Panc1 (cell line): ENCODE measurements at regions of chr10 and their contacts with region 1.

Region 1: DNA sequence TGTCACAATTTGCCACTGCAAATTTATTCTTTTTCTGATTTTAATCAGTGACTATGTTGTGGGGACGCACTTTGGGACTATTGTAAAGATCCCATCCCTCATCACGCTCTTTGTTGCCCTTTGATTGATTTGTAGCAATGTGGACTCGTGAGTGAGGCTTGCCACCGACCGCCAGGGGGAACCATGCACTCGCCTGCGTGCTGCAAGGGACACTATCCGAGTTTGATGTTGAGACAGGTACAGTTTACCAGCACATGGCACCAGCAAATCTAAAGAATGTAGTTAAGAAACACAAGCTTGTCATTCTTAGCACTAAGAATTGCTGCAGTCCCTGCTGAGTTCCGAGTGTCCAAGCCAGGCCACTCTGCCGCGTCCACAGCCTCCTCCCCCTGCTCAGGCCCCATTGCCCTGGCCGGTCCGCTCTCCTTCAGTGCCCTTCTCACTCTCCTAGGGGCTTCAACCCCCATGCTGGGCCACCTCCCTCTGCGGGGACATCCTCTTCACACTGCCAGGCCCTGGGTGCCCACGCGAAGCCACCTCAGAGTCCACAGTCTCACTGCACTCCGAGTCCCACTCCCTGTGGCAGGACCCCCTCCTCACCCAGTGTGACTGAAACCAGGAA is 2.0 kb upstream of the SFTPA2 start:
- DNase-seq: peak; percentile 39
- ATAC-seq: peak; percentile 96
- H3K4me3 ChIP-seq: no peak overlapping the region
- H3K27ac ChIP-seq: no peak overlapping the region
- H3K4me1 ChIP-seq: no peaks in the 10 kb centered on the region
- H3K27me3 ChIP-seq: peaks cover 22% of the 10 kb centered on the region
- CTCF ChIP-seq: peak; percentile 98

Region 2: GRCh38 chr10:79586933-79587332 is 24.7 kb after region 1 on chr10:
- CTCF ChIA-PET with region 1: no interaction called
- POLR2A ChIA-PET with region 1: no interaction called
- in situ Hi-C with region 1: no loop called
- intact Hi-C with region 1: no loop called
- DNase-seq: no peak
- ATAC-seq: no peak
- H3K4me3 ChIP-seq: no peak overlapping the region
- H3K27ac ChIP-seq: no peak overlapping the region
- H3K4me1 ChIP-seq: no peaks in the 10 kb centered on the region
- H3K27me3 ChIP-seq: peaks cover 21% of the 10 kb centered on the region
- CTCF ChIP-seq: no peak

Region 3: DNA sequence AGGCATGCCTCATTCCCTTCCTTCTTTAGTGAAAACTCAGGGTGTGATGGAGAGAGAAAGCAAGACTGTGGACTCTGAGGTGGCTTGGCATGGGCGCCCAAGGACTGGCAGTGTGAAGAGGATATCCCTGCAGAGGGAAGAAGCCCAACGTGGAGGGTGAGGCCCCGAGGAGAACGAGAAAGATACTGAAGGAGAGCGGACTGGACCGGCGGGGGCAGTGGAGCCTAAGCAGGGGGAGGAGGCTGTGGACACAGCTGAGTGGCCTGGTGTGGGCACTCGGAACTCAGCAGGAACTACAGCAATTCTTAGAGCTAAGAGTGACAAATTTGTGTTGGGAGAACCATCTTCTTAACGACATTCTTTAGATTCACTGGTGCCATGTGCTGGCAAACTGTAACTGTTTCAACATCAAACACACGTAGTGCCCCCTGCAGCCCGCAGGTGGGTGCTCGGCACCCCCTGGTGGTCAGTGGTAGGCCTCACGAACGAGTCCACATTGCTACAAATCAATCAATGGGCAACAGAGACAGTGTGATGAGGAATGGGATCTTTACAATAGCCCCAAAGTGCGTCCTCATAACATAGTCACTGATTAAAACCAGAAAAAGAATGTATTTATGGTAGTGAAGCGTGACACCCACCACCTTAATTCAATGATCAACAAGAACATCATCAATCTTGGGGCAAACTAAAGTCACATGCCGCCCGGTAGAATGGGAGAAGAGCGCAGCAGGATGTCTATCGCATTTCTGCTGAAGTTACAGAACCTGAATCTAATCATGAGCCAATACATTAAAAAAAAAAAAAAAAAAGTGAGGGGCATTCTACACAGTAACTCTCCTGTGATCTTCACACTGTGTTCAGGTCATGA is 46.5 kb after region 1 on chr10:
- CTCF ChIA-PET with region 1: no interaction called
- POLR2A ChIA-PET with region 1: no interaction called
- in situ Hi-C with region 1: no loop called
- intact Hi-C with region 1: loop called (anchors 1 kb)
- DNase-seq: no peak
- ATAC-seq: peak; percentile 67
- H3K4me3 ChIP-seq: no peak overlapping the region
- H3K27ac ChIP-seq: no peak overlapping the region
- H3K4me1 ChIP-seq: no peaks in the 10 kb centered on the region
- H3K27me3 ChIP-seq: peaks cover 11% of the 10 kb centered on the region
- CTCF ChIP-seq: peak; percentile 82